Pancreas (tissue), 10 donors: ENCODE measurements at regions of chr4 and their contacts with region 1.

Region 1: GRCh38 chr4:173505924-173506518 is 24.0 kb downstream of the HAND2 start:
- DNase-seq: peak in 3 of 6 donors; percentile 60 to 82 (median 64)
- ATAC-seq: peak; percentile 76 to 87 (median 84)
- H3K4me3 ChIP-seq: no peak overlapping the region
- H3K27ac ChIP-seq: no peak overlapping the region
- H3K4me1 ChIP-seq: no peaks in the 10 kb centered on the region
- H3K27me3 ChIP-seq: no peaks in the 10 kb centered on the region
- CTCF ChIP-seq: peak; percentile 25 to 70 (median 57)

Region 2: GRCh38 chr4:173652283-173652931 is 146.4 kb after region 1 on chr4:
- intact Hi-C with region 1: no loop called
- DNase-seq: no peak
- ATAC-seq: peak in 3 of 4 donors; percentile 20 to 64 (median 60)
- H3K4me3 ChIP-seq: no peak overlapping the region
- H3K27ac ChIP-seq: peak overlapping the region in 1 of 4 donors; percentile 0
- H3K4me1 ChIP-seq: no peaks in the 10 kb centered on the region
- H3K27me3 ChIP-seq: no peaks in the 10 kb centered on the region
- CTCF ChIP-seq: no peak

Region 3: DNA sequence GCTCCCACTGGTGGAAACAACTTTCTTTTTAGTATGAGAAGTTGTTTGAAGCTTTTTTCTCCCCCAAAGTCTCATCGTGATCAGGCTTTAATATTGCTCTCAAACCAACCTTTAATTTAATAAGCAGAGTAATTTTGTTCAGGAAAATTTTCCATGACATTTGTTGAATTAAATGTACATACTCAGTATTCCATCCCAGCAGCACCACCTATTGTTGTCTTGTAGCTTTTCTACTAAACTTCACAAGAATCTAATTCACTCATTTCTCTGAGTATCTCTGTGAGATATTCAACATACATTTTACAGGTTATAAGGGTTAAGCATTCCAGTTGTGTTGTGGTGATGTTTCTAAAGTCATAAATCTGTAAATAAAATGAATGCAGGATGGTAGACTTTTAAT is 242.3 kb after region 1 on chr4:
- intact Hi-C with region 1: loop called in 2 of 3 experiments (anchors 5 to 10 kb)
- DNase-seq: no peak
- ATAC-seq: peak in 2 of 4 donors; percentile 22 to 67
- H3K4me3 ChIP-seq: no peak overlapping the region
- H3K27ac ChIP-seq: no peak overlapping the region
- H3K4me1 ChIP-seq: no peaks in the 10 kb centered on the region
- H3K27me3 ChIP-seq: no peaks in the 10 kb centered on the region
- CTCF ChIP-seq: peak in 1 of 4 donors; percentile 8

Region 4: GRCh38 chr4:173990126-173990868 is 484.3 kb after region 1 on chr4:
- intact Hi-C with region 1: loop called in 1 of 3 experiments (anchors 10 kb)
- DNase-seq: no peak
- ATAC-seq: peak in 3 of 4 donors; percentile 43 to 71 (median 63)
- H3K4me3 ChIP-seq: no peak overlapping the region
- H3K27ac ChIP-seq: no peak overlapping the region
- H3K4me1 ChIP-seq: no peaks in the 10 kb centered on the region
- H3K27me3 ChIP-seq: peaks cover 0 to 4% (median 0%) of the 10 kb centered on the region in 4 donors
- CTCF ChIP-seq: peak in 1 of 4 donors; percentile 31

Region 5: GRCh38 chr4:174119051-174119450 is 613.0 kb after region 1 on chr4:
- intact Hi-C with region 1: loop called in 1 of 3 experiments (anchors 10 kb)
- DNase-seq: no peak
- ATAC-seq: no peak
- H3K4me3 ChIP-seq: no peak overlapping the region
- H3K27ac ChIP-seq: no peak overlapping the region
- H3K4me1 ChIP-seq: no peaks in the 10 kb centered on the region
- H3K27me3 ChIP-seq: no peaks in the 10 kb centered on the region
- CTCF ChIP-seq: no peak